Heart left ventricle (tissue), 16 donors: ENCODE measurements at regions of chr17 and their contacts with region 1.

Region 1: DNA sequence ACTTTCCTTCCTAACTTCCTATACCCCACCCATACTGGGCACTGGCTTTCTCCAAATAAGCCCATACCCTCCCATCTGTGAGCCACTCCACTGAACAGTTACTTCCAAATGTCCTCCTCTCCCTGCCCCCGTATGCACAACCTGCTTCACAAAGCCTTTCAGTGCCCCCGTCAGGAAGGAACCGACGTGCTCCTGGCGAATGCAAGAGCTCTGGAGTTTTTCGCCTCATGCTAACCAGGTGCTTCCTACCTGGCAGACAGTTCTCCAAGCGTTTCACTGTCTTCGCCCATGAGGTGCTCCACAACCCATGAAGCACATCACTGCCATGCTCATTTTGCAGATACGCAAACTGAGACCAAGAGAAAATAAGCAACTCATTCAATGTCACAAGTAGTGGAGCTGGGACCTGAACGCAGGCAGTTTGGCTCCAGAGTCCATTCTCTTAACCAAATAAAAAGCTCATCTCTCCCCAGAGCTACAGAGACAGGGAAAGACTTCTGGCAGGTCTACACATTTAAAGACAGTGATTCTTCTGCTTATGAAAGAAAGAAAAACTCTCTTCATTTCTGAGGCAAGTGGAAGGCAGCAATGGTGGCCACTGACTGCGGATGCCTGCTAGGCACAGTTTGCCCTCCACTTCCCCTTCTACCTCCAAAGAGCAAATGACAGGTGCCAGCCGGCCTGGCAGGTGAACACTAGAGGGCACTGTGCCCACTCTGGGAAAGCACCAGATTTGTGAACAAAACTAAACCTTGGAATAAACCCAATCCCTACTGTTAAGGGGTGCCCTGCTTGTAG is 23.8 kb downstream of the SPHK1 start:
- DNase-seq: peak in 3 of 5 donors; percentile 57 to 63 (median 61)
- ATAC-seq: peak in 1 of 4 donors; percentile 18
- H3K4me3 ChIP-seq: no peak overlapping the region
- H3K27ac ChIP-seq: peak overlapping the region in 2 of 12 donors; percentile 80 to 84
- H3K4me1 ChIP-seq: peaks cover 0 to 87% (median 54%) of the 10 kb centered on the region in 12 donors
- H3K27me3 ChIP-seq: no peaks in the 10 kb centered on the region
- CTCF ChIP-seq: peak; percentile 59 to 83 (median 72)
- POLR2A ChIP-seq: no peak

Region 2: DNA sequence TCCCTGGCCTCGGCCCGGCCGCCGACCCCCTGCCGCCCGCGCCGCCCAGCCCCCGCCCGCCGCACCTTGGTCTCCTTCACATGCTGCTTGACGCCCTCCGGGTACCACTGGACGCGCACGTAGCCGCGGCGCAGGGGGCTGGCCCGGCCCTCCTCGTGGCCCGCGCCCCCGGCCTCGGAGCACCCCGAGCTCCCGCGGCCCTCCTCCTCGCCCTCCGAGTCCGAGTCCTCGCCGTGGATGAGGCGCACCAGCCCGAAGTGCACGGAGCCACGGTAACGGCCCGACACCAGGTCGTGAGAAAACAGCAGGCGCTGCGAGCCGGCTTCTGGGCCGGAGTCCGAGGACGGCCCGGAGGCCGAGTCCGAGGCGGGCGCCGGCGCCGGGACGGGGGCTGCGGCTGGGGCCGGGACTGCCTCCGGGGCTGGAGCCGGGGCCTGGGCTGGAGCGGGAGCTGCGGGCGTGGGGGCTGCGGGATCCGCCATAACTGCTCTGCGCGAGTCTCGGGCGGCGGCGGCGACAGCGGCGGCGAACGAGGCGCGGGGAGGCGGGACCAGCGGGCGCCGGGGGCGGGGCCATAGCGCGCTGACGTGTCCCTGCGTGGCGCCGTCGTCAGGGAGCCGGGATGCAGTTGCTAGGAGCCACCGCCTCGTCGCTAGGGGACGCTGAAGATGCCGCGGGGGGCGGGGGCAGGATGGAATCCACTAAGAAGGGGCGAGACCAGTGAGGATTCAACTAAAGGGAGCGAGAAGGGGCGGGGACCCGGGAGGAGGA is 44.6 kb after region 1 on chr17 and contains the start of gene UBE2O:
- intact Hi-C with region 1: loop called (anchors 2 to 5 kb)
- DNase-seq: peak; percentile 88 to 95 (median 92)
- ATAC-seq: peak; percentile 72 to 96 (median 94)
- H3K4me3 ChIP-seq: peak within 1 kb of the TSS; percentile 74 to 100 (median 94)
- H3K27ac ChIP-seq: peak within 1 kb of the TSS; percentile 74 to 98 (median 88)
- H3K4me1 ChIP-seq: peaks cover 6 to 37% (median 22%) of the 10 kb centered on the region in 12 donors
- H3K27me3 ChIP-seq: no peaks in the 10 kb centered on the region
- CTCF ChIP-seq: peak in 10 of 12 donors; percentile 21 to 66 (median 42)
- POLR2A ChIP-seq: peak in 1 of 2 donors; percentile 90
- total RNA-seq, gene UBE2O: 23.0 to 36.1 (median 31.8) TPM

Region 3: DNA sequence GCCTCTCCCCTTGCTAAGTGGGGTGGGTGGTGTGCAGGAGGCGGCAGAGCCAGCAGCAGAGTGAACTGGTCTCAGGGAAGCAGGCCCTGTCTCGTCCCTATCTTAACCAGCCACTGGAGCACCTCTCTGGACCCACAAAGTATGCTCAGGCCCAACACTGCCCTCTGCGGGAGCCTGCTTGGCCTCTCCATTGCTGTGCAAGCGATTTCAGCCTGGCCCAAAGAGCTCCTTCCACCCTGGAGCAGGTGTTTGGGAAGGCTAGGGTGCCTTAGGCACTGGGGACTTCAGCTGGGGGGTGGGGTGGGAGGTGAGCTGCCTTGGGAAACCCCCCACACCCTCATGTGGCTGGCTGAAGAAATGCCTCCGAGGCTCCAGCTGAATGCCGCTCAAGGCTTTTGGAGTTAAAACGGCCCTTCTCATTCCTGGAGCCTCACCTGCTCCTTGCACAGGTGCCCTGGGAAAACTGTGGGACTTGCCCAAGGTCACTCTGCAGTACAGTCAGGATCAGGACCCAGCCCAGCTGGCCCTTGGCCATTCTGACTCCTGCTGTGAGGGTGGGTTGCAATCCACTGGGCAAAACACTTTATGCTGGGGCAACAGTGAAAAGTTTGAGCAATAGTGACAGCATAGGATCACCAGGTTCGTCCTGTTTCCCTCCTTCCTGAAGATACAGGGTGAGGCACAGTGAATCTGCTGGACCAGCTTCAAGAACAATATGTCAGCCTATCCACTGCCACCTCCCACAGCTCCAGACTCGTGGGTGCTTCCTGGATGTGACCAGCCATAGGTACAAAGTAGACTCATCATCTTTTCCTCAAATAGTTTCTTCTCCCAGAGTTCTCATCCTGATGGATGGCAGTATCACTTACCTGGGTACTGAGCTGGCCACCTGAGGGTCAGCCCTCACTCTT is 50.6 kb after region 1 on chr17:
- intact Hi-C with region 1: loop called in 8 of 10 experiments (anchors 2 to 5 kb)
- DNase-seq: peak; percentile 41 to 74 (median 56)
- ATAC-seq: peak; percentile 84 to 86 (median 84)
- H3K4me3 ChIP-seq: no peak overlapping the region
- H3K27ac ChIP-seq: no peak overlapping the region
- H3K4me1 ChIP-seq: no peaks in the 10 kb centered on the region
- H3K27me3 ChIP-seq: no peaks in the 10 kb centered on the region
- CTCF ChIP-seq: peak; percentile 19 to 60 (median 44)
- POLR2A ChIP-seq: no peak

Region 4: DNA sequence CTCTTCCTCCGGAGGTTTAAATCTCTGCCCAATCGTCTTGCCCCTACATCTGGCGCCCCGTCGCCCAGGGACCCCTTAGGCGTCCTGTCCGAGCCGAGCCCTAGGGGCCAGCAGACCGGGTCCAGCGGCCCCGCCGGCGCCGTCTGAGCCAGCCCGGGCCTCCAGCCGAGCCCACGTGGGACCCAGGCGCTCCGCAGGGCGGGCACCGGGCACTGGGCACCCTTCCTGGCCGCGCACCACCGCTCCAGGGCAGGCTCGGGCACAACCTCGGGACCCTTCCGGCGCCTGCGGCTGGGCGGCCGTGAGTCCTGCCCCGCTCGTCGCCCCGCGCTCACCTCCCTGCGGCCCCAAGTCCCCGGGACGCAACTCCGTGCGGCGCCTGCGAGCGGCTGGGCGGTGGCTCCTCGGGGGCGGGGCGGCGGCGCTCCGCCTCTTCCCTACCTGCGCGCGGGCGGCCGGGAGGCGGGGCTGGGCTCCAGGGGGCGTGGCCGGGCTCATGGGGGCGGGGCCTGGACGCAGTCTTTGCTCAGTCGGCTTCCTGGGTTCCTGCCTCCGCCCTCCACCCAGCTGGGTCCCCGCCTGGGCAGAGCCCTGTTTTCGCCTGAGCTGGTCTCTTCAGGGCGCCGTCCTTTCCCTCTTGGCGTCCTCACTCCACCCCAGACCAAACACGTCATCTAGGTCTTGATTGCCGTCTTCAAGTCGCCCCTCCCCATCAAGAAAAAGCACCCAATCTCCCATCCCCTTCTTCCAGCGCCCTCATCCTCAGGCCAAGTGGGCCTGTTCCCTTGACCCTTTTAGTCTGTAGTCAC is 93.0 kb after region 1 on chr17 and contains the start of gene RHBDF2:
- intact Hi-C with region 1: loop called in 6 of 10 experiments (anchors 2 to 10 kb)
- DNase-seq: peak; percentile 88 to 97 (median 92)
- ATAC-seq: peak; percentile 71 to 90 (median 85)
- H3K4me3 ChIP-seq: peak within 1 kb of the TSS; percentile 46 to 85 (median 80)
- H3K27ac ChIP-seq: peak within 1 kb of the TSS; percentile 72 to 96 (median 92)
- H3K4me1 ChIP-seq: peaks cover 10 to 71% (median 42%) of the 10 kb centered on the region in 12 donors
- H3K27me3 ChIP-seq: no peaks in the 10 kb centered on the region
- CTCF ChIP-seq: no peak
- POLR2A ChIP-seq: peak; percentile 28 to 94
- total RNA-seq, gene RHBDF2: 6.3 to 49.4 (median 14.1) TPM

Region 5: DNA sequence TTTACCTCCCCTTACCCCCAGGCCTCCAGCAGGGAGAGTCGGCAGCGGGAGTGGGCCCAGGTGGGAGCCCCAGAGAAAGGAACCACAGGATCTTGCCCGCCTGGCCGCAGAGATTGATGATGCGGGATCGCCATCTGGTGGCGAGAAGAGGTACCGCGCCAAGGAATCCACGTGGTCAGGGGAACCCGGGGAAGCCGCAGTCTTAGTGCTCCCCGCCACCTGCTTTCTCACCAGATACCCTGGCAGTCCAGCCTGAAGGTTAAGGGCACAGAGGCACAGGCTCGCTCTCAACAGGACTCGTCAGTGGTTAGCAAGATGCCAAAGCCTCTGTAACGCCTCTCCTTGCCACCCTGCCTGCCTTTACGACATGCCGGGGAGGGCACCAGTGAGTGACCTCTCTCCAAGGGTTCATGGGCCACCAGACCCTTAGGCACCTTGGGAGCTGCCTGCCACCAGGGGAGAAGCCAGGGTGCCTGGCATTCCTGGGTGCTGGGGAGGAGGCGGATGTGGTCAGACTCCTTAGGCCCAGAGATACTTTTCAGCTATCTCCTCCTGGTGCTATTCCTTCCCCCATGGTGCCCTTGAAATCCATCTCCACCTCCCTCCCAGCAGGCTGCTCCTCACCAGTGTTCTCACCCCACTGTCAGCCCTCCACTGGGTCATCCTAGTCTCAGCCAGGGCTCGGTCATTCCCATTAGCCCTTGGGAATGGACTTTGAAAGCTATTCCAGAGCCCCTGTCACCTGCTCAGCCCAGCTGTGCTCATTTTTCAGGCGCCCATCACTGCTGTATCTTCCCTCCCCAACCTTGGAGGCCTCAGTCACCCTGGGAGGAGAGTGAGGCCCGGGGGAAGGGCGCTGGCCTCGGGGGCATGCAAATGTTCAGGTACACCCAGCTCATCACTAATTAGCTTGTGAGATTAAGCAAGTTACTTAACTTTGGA is 98.4 kb after region 1 on chr17:
- intact Hi-C with region 1: loop called in 6 of 10 experiments (anchors 2 to 10 kb)
- DNase-seq: peak; percentile 75 to 91 (median 80)
- ATAC-seq: peak; percentile 70 to 82 (median 78)
- H3K4me3 ChIP-seq: no peak overlapping the region
- H3K27ac ChIP-seq: no peak overlapping the region
- H3K4me1 ChIP-seq: peaks cover 0 to 38% (median 9%) of the 10 kb centered on the region in 12 donors
- H3K27me3 ChIP-seq: peaks cover 0 to 9% (median 0%) of the 10 kb centered on the region in 9 donors
- CTCF ChIP-seq: peak; percentile 90 to 97 (median 94)
- POLR2A ChIP-seq: no peak